Activated CD4-positive, alpha-beta memory T cell treated with anti-CD3 and anti-CD28 coated beads, Interleukin-2, amount 10 ng/mL, durations not matched to agents 7 days and 5 days (primary cell): ENCODE measurements at regions of chr1 and their contacts with region 1.

Region 1: GRCh38 chr1:159009704-159010361 is at the start of gene IFI16:
- DNase-seq: peak; percentile 72
- H3K4me3 Mint-ChIP-seq: peak within 1 kb of the TSS; percentile 99
- H3K27ac Mint-ChIP-seq: peak within 1 kb of the TSS; percentile 100
- H3K4me1 Mint-ChIP-seq: peaks cover 43% of the 10 kb centered on the region
- H3K27me3 Mint-ChIP-seq: no peaks in the 10 kb centered on the region
- total RNA-seq, gene IFI16: 394 to 395 TPM

Region 2: DNA sequence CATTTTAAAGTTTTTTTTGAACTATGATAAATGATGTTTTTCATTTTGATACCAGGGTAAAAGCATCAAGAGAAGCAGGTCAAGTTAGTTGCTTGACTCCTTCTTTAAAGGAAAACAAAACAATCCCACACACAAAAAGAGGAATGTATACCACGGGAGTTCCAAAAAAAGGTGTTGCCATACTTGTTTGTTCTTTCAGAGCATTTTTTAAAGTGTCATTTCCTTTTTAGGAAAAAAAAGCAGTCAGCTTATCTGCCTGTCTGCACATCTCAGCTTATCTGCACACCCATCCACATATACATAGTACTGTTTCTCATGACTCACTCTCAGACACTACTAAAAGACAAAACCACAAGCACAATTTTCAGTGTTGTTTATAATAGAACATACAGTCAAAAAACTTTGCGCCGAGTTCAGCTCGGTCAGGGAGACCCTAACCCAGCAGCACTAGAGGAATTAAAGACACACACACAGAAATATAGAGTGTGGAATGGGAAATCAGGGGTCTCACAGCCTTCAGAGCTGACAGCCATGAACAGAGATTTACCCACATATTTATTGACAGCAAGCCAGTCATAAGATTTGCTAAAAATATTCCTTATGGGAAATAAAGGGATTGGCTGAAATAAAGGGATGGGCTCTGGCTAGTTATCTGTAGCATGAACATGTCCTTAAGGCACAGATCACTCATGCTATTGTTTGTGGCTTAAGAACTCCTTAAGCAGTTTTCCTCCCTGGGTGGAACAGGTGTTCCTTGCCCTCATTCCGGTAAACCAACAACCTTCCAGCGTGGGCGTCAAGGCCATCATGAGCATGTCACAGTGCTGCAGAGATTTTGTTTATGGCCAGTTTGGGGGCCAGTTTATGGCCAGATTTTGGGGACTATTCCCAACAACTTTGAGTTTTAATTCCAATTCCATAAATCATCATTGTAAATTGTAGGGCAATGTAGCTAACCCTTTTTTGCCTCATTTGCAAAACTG is 190.1 kb before region 1 on chr1:
- CTCF ChIA-PET with region 1: no interaction called
- POLR2A ChIA-PET with region 1: interaction called, 34 read pairs
- DNase-seq: peak; percentile 33
- H3K4me3 Mint-ChIP-seq: peak overlapping the region; percentile 56
- H3K27ac Mint-ChIP-seq: peak overlapping the region; percentile 89
- H3K4me1 Mint-ChIP-seq: peaks cover 29% of the 10 kb centered on the region
- H3K27me3 Mint-ChIP-seq: no peaks in the 10 kb centered on the region

Region 3: DNA sequence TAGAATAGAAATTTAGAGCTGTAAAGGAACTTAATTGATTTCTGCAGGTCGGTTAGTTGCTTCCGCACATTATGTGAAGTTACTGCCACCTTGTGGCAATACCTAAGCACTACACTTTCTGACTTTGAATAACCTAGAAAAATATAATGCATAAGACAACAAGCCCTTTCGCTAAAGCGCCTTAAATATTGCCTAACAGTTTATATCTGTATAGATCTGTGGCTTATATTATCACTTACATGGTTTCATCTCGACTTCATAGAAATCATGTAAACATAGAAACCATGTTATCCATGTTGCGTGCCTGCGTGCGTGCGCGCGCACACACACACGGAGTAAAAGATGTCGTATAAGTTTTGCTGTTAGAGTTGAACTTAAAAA is 11.1 kb before region 1 on chr1:
- CTCF ChIA-PET with region 1: interaction called, 15 read pairs
- POLR2A ChIA-PET with region 1: interaction called, 80 read pairs
- DNase-seq: peak; percentile 52
- H3K4me3 Mint-ChIP-seq: peak overlapping the region; percentile 49
- H3K27ac Mint-ChIP-seq: peak overlapping the region; percentile 73
- H3K4me1 Mint-ChIP-seq: peaks cover 41% of the 10 kb centered on the region
- H3K27me3 Mint-ChIP-seq: no peaks in the 10 kb centered on the region

Region 4: GRCh38 chr1:159071970-159072582 is 62.2 kb after region 1 on chr1:
- CTCF ChIA-PET with region 1: interaction called, 12 read pairs
- POLR2A ChIA-PET with region 1: interaction called, 260 read pairs
- DNase-seq: no peak
- H3K4me3 Mint-ChIP-seq: no peak overlapping the region
- H3K27ac Mint-ChIP-seq: peak overlapping the region; percentile 21
- H3K4me1 Mint-ChIP-seq: peaks cover 67% of the 10 kb centered on the region
- H3K27me3 Mint-ChIP-seq: no peaks in the 10 kb centered on the region

Region 5: GRCh38 chr1:159089184-159089791 is 79.5 kb after region 1 on chr1:
- CTCF ChIA-PET with region 1: no interaction called
- POLR2A ChIA-PET with region 1: interaction called, 14 read pairs
- DNase-seq: no peak
- H3K4me3 Mint-ChIP-seq: no peak overlapping the region
- H3K27ac Mint-ChIP-seq: no peak overlapping the region
- H3K4me1 Mint-ChIP-seq: peaks cover 55% of the 10 kb centered on the region
- H3K27me3 Mint-ChIP-seq: no peaks in the 10 kb centered on the region